Psoas muscle (tissue), 8 donors: ENCODE measurements at regions of chr12 and their contacts with region 1.

Region 1: DNA sequence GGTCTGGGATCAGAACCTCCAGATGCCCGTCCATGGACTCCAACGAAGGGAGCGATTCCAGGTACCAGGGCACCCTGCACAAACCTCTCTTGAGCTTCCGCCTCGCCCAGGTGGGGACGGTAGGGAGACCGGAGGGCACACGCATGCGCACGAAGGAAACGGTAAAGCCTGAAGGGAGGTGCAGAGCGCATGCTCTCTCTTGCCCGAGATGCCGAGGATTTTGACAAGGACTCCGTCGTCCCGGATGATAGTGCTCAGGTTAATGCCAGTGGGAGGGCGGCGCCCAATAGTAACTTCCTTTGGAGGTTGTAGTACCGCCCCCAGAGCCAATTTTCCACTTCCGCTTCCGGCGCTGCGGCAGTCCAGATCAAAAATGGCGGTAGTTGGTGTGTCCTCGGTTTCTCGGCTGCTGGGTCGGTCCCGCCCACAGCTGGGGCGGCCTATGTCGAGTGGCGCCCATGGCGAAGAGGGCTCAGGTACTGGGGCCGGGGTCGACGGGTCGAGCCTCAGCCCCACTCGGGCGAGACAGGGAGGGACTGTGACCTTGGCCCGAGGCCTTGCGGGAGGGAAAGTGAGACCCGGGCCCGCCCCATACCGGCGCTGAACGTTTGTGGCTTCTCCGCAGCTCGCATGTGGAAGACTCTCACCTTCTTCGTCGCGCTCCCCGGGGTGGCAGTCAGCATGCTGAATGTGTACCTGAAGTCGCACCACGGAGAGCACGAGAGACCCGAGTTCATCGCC is at the start of gene COX6A1:
- DNase-seq: peak; percentile 94 to 97
- ATAC-seq: peak; percentile 98 to 99 (median 99)
- H3K4me3 ChIP-seq: peak within 1 kb of the TSS; percentile 98
- H3K27ac ChIP-seq: peak within 1 kb of the TSS; percentile 89
- H3K4me1 ChIP-seq: peaks cover 18% of the 10 kb centered on the region
- H3K27me3 ChIP-seq: no peaks in the 10 kb centered on the region
- CTCF ChIP-seq: no peak
- total RNA-seq, gene COX6A1: 34.4 to 52.6 (median 38.5) TPM

Region 2: DNA sequence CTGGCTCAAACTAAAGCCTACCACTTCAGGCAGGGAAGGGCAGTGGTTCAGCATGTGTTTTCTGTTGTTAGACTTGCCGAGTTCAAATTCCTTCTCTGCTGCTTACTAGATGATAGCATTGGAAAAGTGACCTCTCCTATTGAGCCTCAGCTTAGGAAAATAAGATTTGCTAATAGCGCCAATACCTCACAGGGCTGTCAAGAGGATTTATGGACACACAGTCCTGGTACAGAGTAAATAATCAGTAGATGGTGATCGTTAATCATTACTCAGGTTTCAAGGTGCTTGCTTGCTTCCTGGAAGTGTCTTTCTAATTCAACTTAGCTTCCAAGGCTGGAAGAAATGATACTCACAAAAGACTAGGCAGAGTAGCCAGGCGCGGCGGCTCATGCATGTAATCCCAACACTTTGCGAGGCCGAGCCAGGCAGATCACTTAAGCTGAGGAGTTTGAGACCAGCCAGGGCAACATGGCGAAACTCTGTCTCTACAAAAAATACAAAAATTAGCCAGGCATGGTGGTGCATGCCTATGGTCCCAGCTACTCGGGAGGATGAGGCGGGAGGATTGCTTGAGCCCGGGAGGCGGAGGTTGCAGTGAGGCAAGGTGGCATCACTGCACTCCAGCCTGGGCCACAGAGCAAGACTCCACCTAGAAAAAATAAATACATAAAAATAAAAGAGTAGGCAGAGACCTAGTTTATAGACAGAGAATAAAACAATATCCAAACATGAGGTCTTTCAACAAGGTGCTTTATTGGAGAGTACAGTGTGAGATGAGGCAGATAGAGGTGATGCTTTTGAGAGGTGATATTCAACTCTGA is 116.3 kb before region 1 on chr12:
- intact Hi-C with region 1: loop called in 1 of 2 experiments (anchors 10 kb)
- DNase-seq: no peak
- ATAC-seq: no peak
- H3K4me3 ChIP-seq: no peak overlapping the region
- H3K27ac ChIP-seq: no peak overlapping the region
- H3K4me1 ChIP-seq: peaks cover 4% of the 10 kb centered on the region
- H3K27me3 ChIP-seq: no peaks in the 10 kb centered on the region
- CTCF ChIP-seq: no peak

Region 3: GRCh38 chr12:120489018-120489417 is 51.1 kb after region 1 on chr12:
- intact Hi-C with region 1: no loop called
- DNase-seq: no peak
- ATAC-seq: no peak
- H3K4me3 ChIP-seq: no peak overlapping the region
- H3K27ac ChIP-seq: no peak overlapping the region
- H3K4me1 ChIP-seq: peaks cover 6% of the 10 kb centered on the region
- H3K27me3 ChIP-seq: no peaks in the 10 kb centered on the region
- CTCF ChIP-seq: no peak

Region 4: DNA sequence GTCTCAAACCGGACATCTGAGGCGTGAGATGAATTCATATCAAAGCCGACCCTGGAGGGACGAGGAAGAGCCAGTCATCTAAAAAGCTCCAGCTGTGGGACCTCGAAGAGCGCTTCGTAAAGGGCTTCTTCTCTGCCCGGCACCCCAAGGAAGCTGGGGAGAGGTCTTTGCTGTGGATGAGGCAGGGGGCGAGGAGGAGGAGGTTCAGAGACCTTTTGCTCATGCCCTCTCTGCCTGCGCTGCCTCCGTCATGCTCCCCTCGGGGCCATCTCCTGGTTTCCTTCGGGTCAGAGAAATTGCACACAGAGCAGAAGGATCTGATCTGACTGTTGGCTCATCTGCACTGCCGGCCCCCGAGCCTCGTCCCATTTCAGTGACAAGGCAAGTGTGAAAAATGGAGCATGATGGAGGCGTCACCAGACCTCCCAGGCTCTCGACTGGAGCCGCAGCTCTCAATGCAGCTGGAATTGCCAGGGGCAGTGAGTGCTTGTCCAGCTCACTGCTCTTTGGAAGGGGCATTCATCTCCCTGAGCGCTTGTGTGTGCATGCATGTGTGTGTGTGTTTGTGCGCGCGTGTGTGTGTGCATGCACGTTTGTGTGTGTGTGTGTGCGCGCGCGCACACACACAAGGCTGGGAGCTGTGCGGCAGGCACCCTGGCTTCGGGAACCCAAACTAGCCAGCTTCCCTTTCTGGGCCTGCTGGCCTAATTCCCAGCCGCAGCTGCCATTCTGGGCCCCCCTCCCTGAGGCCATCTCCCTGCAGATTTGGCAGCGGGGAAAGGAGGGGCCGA is 211.7 kb after region 1 on chr12:
- intact Hi-C with region 1: no loop called
- DNase-seq: no peak
- ATAC-seq: no peak
- H3K4me3 ChIP-seq: peak overlapping the region; percentile 54
- H3K27ac ChIP-seq: peak overlapping the region; percentile 54
- H3K4me1 ChIP-seq: peaks cover 6% of the 10 kb centered on the region
- H3K27me3 ChIP-seq: peaks cover 0 to 22% (median 0%) of the 10 kb centered on the region in 3 donors
- CTCF ChIP-seq: no peak